ENCODE measurements at regions of chr15 and their contacts with region 1.

Region 1: DNA sequence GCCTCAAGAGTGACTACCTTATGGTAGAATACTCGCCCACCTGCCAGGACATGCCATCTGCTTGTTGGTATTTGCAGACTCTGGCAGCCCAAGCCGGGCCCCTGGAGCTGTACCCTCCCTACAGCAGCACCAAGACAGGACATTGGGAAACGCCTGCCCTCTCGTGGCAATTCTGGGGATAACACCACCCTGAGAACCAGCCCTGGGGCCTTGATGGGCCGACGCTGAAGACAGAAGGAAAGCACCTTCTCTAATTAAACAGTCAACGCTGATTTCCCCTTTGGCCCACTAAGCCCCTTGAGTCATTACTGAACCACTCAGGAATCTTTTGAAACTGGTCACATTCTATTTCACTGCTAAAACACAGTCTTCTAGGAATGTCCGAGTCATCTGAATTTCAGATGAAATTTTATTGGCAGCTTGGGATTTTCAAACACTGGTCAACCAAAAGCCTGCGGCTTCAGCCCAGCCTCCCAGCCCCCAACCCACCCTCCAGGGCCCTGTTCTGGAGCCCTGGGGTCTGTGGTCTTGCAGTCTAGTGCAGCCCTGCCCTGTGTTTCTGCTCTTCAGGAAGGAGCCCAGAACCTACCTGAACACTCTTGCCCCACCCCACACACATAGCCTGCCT is 91.3 kb downstream of the TMEM266 start:
- DNase-seq: peak; percentile 72 to 88
- ATAC-seq: peak; percentile 73 to 92; a peak in 4 of 6 replicates
- H3K4me3 ChIP-seq: no peak overlapping the region
- H3K27ac ChIP-seq: peak overlapping the region; percentile 6 to 10; a peak in 1 of 6 replicates
- H3K4me1 ChIP-seq: 0 out of 3 replicates have a peak, but pooled peaks cover 3% of the 10 kb centered on the region
- CTCF ChIP-seq: peak; percentile 82
- EP300 ChIP-seq: no peak
- POLR2A ChIP-seq: no peak
- RAD21 ChIP-seq: peak; percentile 72 to 78

Region 2: GRCh38 chr15:76057332-76058000 is 93.6 kb before region 1 on chr15:
- CTCF ChIA-PET with region 1: interaction called, 448 read pairs
- POLR2A ChIA-PET with region 1: no interaction called
- DNase-seq: peak; percentile 53 to 61
- ATAC-seq: no peak
- H3K4me3 ChIP-seq: no peak overlapping the region
- H3K27ac ChIP-seq: no peak overlapping the region
- H3K4me1 ChIP-seq: peaks cover 15% of the 10 kb centered on the region
- CTCF ChIP-seq: peak; percentile 92
- EP300 ChIP-seq: no peak
- POLR2A ChIP-seq: no peak
- RAD21 ChIP-seq: peak; percentile 70 to 71

Region 3: GRCh38 chr15:76127880-76128279 is 23.2 kb before region 1 on chr15:
- CTCF ChIA-PET with region 1: interaction called, 292 read pairs
- POLR2A ChIA-PET with region 1: no interaction called
- DNase-seq: no peak
- ATAC-seq: no peak
- H3K4me3 ChIP-seq: no peak overlapping the region
- H3K27ac ChIP-seq: no peak overlapping the region
- H3K4me1 ChIP-seq: no peaks in the 10 kb centered on the region
- CTCF ChIP-seq: no peak
- EP300 ChIP-seq: no peak
- POLR2A ChIP-seq: no peak
- RAD21 ChIP-seq: no peak

Region 4: GRCh38 chr15:76163475-76163881 is 12.4 kb after region 1 on chr15:
- CTCF ChIA-PET with region 1: interaction called, 205 read pairs
- POLR2A ChIA-PET with region 1: no interaction called
- DNase-seq: peak in 1 of 2 experiments; percentile 51
- ATAC-seq: peak; percentile 26 to 58; a peak in 5 of 6 replicates
- H3K4me3 ChIP-seq: no peak overlapping the region
- H3K27ac ChIP-seq: peak overlapping the region; percentile 29 to 47; a peak in 4 of 6 replicates
- H3K4me1 ChIP-seq: peaks cover 10% of the 10 kb centered on the region
- CTCF ChIP-seq: no peak
- EP300 ChIP-seq: no peak
- POLR2A ChIP-seq: no peak
- RAD21 ChIP-seq: no peak

Region 5: GRCh38 chr15:76330080-76330680 is 179.1 kb after region 1 on chr15:
- CTCF ChIA-PET with region 1: interaction called, 11 read pairs
- POLR2A ChIA-PET with region 1: no interaction called
- DNase-seq: peak; percentile 81 to 90
- ATAC-seq: peak; percentile 78 to 88
- H3K4me3 ChIP-seq: no peak overlapping the region
- H3K27ac ChIP-seq: peak overlapping the region; percentile 29 to 40; a peak in 4 of 6 replicates
- H3K4me1 ChIP-seq: peaks cover 48% of the 10 kb centered on the region
- CTCF ChIP-seq: peak; percentile 43
- EP300 ChIP-seq: no peak
- POLR2A ChIP-seq: no peak
- RAD21 ChIP-seq: peak; percentile 58 to 77